Mammary epithelial cell (primary cell): ENCODE measurements at regions of chr2 and their contacts with region 1.

Region 1: GRCh38 chr2:137741963-137742362 is 222.3 kb upstream of the HNMT start:
- DNase-seq: no peak
- H3K4me3 ChIP-seq: no peak overlapping the region
- H3K27ac ChIP-seq: no peak overlapping the region
- H3K4me1 ChIP-seq: no peaks in the 10 kb centered on the region
- H3K27me3 ChIP-seq: no peaks in the 10 kb centered on the region
- CTCF ChIP-seq: no peak

Region 2: DNA sequence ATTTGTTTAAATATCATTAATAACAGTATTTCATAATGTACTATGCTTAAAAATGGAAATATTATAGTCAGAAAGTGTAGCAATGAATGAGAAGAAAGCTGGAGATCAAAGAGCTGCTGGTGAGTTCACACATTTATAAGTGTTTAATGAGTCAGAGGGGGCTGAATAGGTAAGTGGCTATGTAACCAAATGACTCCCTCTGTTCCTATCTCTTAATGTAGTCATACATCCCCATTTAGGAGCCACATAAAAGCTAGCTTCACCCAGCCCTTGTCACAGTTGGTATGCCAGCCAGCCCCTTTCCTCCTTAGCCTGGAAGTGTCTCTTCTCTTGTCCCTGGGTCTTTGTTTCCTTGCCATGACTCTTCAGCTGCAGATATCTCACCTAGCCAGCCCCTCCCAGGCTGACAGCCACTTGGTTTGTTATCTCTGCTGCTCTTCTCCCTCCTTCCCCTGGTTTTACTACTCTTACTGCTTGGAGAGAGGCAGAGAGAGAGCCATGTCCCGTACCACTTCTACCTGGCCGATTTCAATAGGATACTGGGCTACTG is 216.2 kb before region 1 on chr2:
- CTCF ChIA-PET with region 1: no interaction called
- dilution Hi-C with region 1: no loop called
- in situ Hi-C with region 1: no loop called
- intact Hi-C with region 1: no loop called
- DNase-seq: no peak
- H3K4me3 ChIP-seq: no peak overlapping the region
- H3K27ac ChIP-seq: no peak overlapping the region
- H3K4me1 ChIP-seq: no peaks in the 10 kb centered on the region
- H3K27me3 ChIP-seq: peaks cover 1% of the 10 kb centered on the region
- CTCF ChIP-seq: no peak

Region 3: GRCh38 chr2:137706786-137707613 is 35.0 kb before region 1 on chr2:
- CTCF ChIA-PET with region 1: no interaction called
- dilution Hi-C with region 1: loop called (anchors 5 kb)
- in situ Hi-C with region 1: no loop called
- intact Hi-C with region 1: no loop called
- DNase-seq: no peak
- H3K4me3 ChIP-seq: no peak overlapping the region
- H3K27ac ChIP-seq: no peak overlapping the region
- H3K4me1 ChIP-seq: no peaks in the 10 kb centered on the region
- H3K27me3 ChIP-seq: no peaks in the 10 kb centered on the region
- CTCF ChIP-seq: no peak

Region 4: DNA sequence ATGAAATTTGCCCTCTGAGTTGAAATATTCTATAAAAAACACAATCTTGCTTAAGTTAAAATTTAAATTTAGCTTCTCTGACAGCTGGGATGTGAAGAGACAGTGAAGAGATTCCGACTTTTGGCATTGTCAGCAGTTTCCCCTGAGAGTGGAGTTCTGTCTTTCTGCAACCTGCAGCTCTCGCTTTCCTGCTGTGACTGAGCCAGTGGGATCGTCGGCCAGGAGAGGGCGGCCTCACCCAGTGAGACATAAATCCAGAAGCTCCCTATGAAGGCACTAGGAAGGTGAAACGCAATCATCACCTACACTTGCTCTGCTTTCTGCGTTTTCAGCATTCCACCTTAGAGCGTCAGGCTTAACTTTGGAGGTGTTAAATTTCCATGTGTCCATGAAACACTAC is 146.9 kb after region 1 on chr2:
- CTCF ChIA-PET with region 1: no interaction called
- dilution Hi-C with region 1: no loop called
- in situ Hi-C with region 1: no loop called
- intact Hi-C with region 1: no loop called
- DNase-seq: peak; percentile 29
- H3K4me3 ChIP-seq: no peak overlapping the region
- H3K27ac ChIP-seq: no peak overlapping the region
- H3K4me1 ChIP-seq: no peaks in the 10 kb centered on the region
- H3K27me3 ChIP-seq: no peaks in the 10 kb centered on the region
- CTCF ChIP-seq: peak; percentile 45 to 59